ENCODE measurements at regions of chr6 and their contacts with region 1.

Region 1: DNA sequence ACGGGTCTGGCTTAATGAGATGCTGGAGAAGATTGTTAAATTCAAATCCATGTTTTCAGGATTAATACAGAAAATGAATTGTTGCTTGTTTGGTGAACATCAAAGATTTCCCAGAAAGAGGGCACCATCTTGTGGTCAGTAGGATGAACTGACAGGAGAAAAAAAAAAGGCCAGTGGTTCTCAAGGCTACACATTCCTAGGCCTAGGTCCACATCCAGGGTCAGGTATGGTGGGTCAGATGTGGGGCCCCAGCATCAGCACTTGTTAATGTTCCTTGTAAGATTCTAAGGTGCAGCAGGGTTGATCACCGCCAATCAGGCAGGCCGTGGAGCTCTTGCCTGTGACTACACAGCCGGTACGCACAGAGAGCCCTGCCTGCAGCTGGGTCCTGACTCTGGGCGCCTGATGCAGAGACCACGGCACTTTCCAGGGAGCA is 34.0 kb upstream of the FOXO3 start:
- DNase-seq: no peak
- H3K4me3 ChIP-seq: no peak overlapping the region
- H3K27ac ChIP-seq: no peak overlapping the region
- H3K4me1 ChIP-seq: no peaks in the 10 kb centered on the region
- H3K27me3 ChIP-seq: no peaks in the 10 kb centered on the region
- CTCF ChIP-seq: peak; percentile 20 to 62 (median 59)
- POLR2A ChIP-seq: no peak

Region 2: DNA sequence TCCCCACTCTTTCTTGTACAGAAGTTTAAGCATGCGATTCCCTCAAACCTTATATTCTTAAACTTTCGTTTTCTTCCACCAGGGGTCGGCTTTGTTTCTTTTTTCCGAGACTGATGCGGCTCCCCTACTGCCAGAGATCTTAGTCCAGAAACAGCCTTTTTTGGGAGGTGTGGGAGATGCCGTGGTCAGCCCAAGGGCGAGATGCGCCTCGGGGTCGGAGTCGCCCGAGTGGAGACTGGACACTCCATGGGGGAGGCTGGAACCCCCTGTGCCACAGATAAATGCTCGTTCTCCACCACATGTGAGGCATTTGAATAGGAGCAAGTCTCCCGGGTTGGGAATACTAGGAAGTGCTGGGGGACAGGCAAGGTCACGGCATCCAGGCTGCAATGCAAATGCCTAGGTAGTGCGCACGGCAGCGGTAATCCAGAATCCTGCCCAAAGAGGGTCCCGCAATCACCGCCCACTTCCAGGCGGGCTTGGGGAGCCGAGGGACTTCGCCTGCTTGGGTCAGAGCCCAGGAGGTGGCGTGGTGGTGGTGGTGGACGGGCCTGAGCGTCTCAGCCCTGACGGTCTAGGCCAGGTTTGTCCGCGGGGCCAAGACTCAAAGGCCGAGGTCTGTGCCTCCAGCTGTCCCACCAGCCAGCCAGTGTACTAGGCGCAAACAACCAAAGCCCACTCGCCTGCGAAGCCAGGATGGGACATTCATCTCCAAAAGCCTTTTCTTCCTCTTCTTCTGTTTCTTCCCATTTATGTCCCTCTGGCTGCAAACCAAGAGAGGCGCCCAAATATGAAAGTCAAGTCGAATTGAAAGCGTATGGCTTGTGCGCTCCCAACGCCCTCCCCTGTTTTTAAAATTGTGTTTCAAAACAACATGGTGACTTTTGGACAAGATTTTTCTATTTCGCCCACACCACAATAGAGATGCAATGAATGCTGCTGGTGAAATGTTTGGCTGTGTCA is 412.9 kb before region 1 on chr6:
- intact Hi-C with region 1: loop called (anchors 10 kb)
- DNase-seq: no peak
- H3K4me3 ChIP-seq: peak overlapping the region in 1 of 2 donors; percentile 23
- H3K27ac ChIP-seq: no peak overlapping the region
- H3K4me1 ChIP-seq: peaks cover 40% of the 10 kb centered on the region
- H3K27me3 ChIP-seq: peaks cover 10% of the 10 kb centered on the region
- CTCF ChIP-seq: peak in 2 of 3 experiments; percentile 51 to 63
- POLR2A ChIP-seq: no peak

Region 3: GRCh38 chr6:108453597-108454185 is 73.1 kb before region 1 on chr6:
- intact Hi-C with region 1: no loop called
- DNase-seq: no peak
- H3K4me3 ChIP-seq: no peak overlapping the region
- H3K27ac ChIP-seq: no peak overlapping the region
- H3K4me1 ChIP-seq: peaks cover 13% of the 10 kb centered on the region
- H3K27me3 ChIP-seq: no peaks in the 10 kb centered on the region
- CTCF ChIP-seq: no peak
- POLR2A ChIP-seq: no peak